Posterior vena cava (tissue), 2 donors: ENCODE measurements at regions of chr7 and their contacts with region 1.

Region 1: DNA sequence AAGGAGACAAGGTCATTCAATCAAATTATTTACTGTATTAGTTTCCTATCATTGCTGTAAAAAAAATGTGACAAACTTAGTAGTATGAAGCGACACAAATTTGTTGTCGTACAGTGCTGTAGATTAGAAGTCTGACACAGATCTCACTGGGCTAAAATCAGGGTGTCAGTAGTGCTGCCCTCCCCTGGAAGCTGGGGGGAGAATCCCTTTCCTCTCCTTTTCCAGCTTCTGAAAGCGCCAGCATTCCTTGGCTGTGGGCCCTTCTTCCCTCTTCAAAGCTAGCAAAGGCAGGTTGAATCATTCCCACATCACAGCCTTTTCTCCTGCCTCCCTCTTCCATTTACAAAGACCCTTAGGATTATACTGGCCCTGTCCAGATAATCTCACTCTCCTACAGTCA is 28.0 kb downstream of the VPS41 start:
- DNase-seq: no peak

Region 2: GRCh38 chr7:38909870-38910269 is 28.9 kb after region 1 on chr7:
- intact Hi-C with region 1: loop called in 1 of 2 experiments (anchors 1 kb)
- DNase-seq: no peak

Region 3: GRCh38 chr7:39051707-39052106 is 170.7 kb after region 1 on chr7:
- intact Hi-C with region 1: no loop called
- DNase-seq: no peak